Activated T-helper 1 cell treated with anti-CD3 and anti-CD28 coated beads, Interleukin-12 subunit alpha, Interleukin-12 subunit beta, Interleukin-2, Interleukin-4 antibody, amounts not matched to agents 30 ng/mL and 10 ng/mL and 1 ng/mL, durations not matched to agents 14 hours and 24 hours and 36 hours (primary cell): ENCODE measurements at regions of chr5 and their contacts with region 1.

Region 1: DNA sequence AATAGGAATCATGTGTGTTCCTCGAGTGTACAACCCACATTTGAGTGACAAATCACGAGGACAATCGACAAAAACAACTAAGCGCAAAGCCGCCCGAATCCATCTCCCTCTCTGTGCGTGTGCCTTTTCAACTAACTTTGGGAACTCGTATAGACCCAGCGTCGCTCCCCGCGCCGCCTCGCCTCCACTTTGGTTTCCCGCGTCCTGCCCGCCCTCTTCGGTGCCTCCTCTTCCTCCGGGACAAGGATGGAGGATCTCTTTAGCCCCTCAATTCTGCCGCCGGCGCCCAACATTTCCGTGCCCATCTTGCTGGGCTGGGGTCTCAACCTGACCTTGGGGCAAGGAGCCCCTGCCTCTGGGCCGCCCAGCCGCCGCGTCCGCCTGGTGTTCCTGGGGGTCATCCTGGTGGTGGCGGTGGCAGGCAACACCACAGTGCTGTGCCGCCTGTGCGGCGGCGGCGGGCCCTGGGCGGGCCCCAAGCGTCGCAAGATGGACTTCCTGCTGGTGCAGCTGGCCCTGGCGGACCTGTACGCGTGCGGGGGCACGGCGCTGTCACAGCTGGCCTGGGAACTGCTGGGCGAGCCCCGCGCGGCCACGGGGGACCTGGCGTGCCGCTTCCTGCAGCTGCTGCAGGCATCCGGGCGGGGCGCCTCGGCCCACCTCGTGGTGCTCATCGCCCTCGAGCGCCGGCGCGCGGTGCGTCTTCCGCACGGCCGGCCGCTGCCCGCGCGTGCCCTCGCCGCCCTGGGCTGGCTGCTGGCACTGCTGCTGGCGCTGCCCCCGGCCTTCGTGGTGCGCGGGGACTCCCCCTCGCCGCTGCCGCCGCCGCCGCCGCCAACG is at the start of gene GPR150:
- DNase-seq: peak; percentile 46
- H3K4me3 Mint-ChIP-seq: peak within 1 kb of the TSS; percentile 83
- H3K27ac Mint-ChIP-seq: peak within 1 kb of the TSS; percentile 72
- H3K4me1 Mint-ChIP-seq: peaks cover 38% of the 10 kb centered on the region
- H3K27me3 Mint-ChIP-seq: peaks cover 22% of the 10 kb centered on the region
- total RNA-seq, gene GPR150: 0.22 and 0.26 TPM in 2 replicates

Region 2: GRCh38 chr5:94314460-94315132 is 1305.7 kb before region 1 on chr5:
- intact Hi-C with region 1: no loop called
- DNase-seq: no peak
- H3K4me3 Mint-ChIP-seq: no peak overlapping the region
- H3K27ac Mint-ChIP-seq: no peak overlapping the region
- H3K4me1 Mint-ChIP-seq: no peaks in the 10 kb centered on the region
- H3K27me3 Mint-ChIP-seq: no peaks in the 10 kb centered on the region

Region 3: DNA sequence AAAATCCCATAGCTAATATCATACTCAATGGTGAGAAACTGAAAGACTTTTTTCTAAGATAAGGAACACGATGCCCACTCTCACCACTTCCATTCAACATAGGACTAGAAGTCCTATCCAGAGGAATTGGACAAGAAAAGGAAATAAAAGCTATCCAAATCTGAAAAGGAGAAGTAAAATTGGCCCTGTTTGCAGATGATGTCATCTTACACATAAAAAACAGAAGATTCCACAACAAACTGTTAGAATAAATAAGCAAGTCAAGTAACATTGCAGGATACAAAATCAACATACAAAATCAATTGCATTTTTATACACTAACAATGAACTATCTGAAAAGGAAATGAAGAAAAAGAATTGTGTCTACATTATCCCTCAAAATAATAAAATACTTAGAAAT is 643.4 kb before region 1 on chr5:
- intact Hi-C with region 1: no loop called
- DNase-seq: no peak
- H3K4me3 Mint-ChIP-seq: no peak overlapping the region
- H3K27ac Mint-ChIP-seq: no peak overlapping the region
- H3K4me1 Mint-ChIP-seq: no peaks in the 10 kb centered on the region
- H3K27me3 Mint-ChIP-seq: peaks cover under 1% of the 10 kb centered on the region

Region 4: DNA sequence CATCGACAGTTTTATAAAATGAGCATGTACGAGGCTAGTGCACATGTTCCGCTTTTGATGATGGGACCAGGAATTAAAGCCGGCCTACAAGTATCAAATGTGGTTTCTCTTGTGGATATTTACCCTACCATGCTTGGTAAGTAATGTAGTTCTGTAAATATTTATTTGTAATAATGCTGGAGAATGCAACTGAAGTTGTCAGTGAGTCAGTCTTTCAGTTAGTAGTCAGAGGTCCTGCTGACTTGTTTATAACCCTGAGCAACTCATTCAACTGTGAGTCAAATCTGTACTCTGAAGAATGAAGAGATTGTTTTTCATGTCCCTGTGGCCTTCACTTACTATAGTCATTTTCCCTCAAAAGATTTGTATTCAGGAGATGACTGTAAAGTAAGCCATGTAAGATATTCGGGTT is 28.8 kb before region 1 on chr5:
- intact Hi-C with region 1: loop called (anchors 1 kb)
- DNase-seq: no peak
- H3K4me3 Mint-ChIP-seq: no peak overlapping the region
- H3K27ac Mint-ChIP-seq: peak overlapping the region; percentile 24
- H3K4me1 Mint-ChIP-seq: peaks cover 23% of the 10 kb centered on the region
- H3K27me3 Mint-ChIP-seq: peaks cover 2% of the 10 kb centered on the region

Region 5: DNA sequence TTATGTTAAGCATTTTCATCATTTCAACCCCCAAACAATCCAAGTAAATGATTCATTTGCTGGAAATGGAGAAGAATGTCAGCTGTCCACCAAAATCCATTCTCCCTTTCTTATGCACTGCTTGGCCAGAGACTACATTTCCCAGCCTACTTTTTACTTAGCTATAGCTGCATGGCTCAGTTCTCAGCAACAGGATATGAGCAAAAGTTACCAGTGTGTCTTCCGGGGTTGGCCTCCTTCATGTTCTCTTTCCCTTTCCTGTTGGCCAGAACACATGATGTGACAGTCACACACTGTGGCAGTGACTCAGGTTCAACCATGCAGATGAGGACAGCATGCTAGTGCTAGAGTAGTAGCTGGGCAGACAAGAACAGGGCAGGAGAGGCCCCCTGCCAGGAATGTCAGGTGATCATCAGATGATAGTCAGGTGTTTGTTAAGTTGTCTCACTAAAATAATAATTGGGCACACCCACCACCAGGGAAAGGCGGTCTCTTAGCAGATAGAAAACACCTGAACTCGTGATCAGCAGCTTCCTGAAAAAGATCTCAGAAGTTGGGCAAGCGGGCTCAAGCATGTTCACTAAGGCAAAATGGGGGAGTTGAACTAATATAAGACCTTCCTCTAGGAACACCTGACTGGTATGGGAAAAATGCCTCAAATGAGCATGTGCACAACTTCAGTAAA is 11.9 kb after region 1 on chr5:
- intact Hi-C with region 1: loop called (anchors 1 kb)
- DNase-seq: peak; percentile 59
- H3K4me3 Mint-ChIP-seq: peak overlapping the region; percentile 4
- H3K27ac Mint-ChIP-seq: peak overlapping the region; percentile 83
- H3K4me1 Mint-ChIP-seq: peaks cover 13% of the 10 kb centered on the region
- H3K27me3 Mint-ChIP-seq: peaks cover 8% of the 10 kb centered on the region

Region 6: GRCh38 chr5:95803284-95804148 is 183.3 kb after region 1 on chr5:
- intact Hi-C with region 1: no loop called
- DNase-seq: no peak
- H3K4me3 Mint-ChIP-seq: no peak overlapping the region
- H3K27ac Mint-ChIP-seq: no peak overlapping the region
- H3K4me1 Mint-ChIP-seq: peaks cover 16% of the 10 kb centered on the region
- H3K27me3 Mint-ChIP-seq: no peaks in the 10 kb centered on the region